Activated B cell treated with CpG ODN at 0.5 μM for 24 hours (primary cell): ENCODE measurements at regions of chr1 and their contacts with region 1.

Region 1: GRCh38 chr1:45011837-45012638 is at the start of gene UROD:
- DNase-seq: peak; percentile 69
- ATAC-seq: peak; percentile 84
- H3K4me3 Mint-ChIP-seq: peak within 1 kb of the TSS; percentile 83
- H3K27ac Mint-ChIP-seq: peak within 1 kb of the TSS; percentile 81
- H3K4me1 Mint-ChIP-seq: peaks cover 43% of the 10 kb centered on the region
- H3K27me3 Mint-ChIP-seq: no peaks in the 10 kb centered on the region
- CTCF ChIP-seq: no peak
- total RNA-seq, gene UROD: 60.3 and 64.9 TPM in 2 replicates

Region 2: GRCh38 chr1:44664730-44665370 is 347.2 kb before region 1 on chr1:
- CTCF ChIA-PET with region 1: no interaction called
- POLR2A ChIA-PET with region 1: no interaction called
- intact Hi-C with region 1: no loop called
- DNase-seq: no peak
- ATAC-seq: peak; percentile 69
- H3K4me3 Mint-ChIP-seq: no peak overlapping the region
- H3K27ac Mint-ChIP-seq: peak overlapping the region; percentile 16
- H3K4me1 Mint-ChIP-seq: peaks cover 13% of the 10 kb centered on the region
- H3K27me3 Mint-ChIP-seq: no peaks in the 10 kb centered on the region
- CTCF ChIP-seq: no peak

Region 3: DNA sequence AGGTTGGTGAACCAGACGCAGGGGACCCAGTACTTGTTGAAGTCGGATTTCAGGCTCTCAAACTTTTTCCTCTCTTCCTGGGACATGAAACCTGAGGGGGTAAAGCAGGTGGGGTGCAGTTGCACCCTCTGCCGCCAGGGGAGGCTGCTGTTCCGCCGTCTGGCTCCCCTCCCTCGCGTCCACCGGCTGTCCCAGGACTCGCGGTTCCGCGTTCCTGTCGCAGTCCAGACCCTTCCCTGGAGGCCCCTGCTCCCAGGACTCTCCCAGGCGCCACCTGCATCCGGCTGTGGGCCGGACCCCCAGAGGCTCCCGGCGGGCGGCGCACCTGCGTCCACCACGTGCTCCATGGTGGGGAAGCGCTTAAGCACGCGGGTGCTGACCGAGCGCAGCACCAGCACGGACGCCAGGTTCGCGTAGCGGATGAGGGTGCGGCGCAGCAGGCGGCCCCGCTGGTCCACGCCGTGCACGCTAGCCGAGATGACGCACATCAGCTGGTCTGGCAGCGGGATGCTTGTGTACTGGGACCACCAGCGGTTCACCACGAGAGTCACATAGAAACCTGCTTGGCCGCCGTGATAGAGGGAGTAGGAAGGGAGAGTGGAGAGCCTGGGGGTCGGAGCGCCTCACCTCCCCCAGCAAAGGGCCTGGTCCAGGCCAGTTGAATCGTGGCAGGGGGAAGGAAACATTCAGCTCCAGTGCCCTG is 225.7 kb before region 1 on chr1:
- CTCF ChIA-PET with region 1: interaction called, 12 read pairs
- POLR2A ChIA-PET with region 1: interaction called, 6 read pairs
- intact Hi-C with region 1: loop called (anchors 1 kb)
- DNase-seq: peak; percentile 81
- ATAC-seq: peak; percentile 79
- H3K4me3 Mint-ChIP-seq: peak overlapping the region; percentile 75
- H3K27ac Mint-ChIP-seq: peak overlapping the region; percentile 86
- H3K4me1 Mint-ChIP-seq: peaks cover 32% of the 10 kb centered on the region
- H3K27me3 Mint-ChIP-seq: no peaks in the 10 kb centered on the region
- CTCF ChIP-seq: peak; percentile 100

Region 4: GRCh38 chr1:44929531-44929930 is 82.5 kb before region 1 on chr1:
- CTCF ChIA-PET with region 1: no interaction called
- POLR2A ChIA-PET with region 1: no interaction called
- intact Hi-C with region 1: no loop called
- DNase-seq: no peak
- ATAC-seq: no peak
- H3K4me3 Mint-ChIP-seq: no peak overlapping the region
- H3K27ac Mint-ChIP-seq: no peak overlapping the region
- H3K4me1 Mint-ChIP-seq: no peaks in the 10 kb centered on the region
- H3K27me3 Mint-ChIP-seq: no peaks in the 10 kb centered on the region
- CTCF ChIP-seq: no peak

Region 5: DNA sequence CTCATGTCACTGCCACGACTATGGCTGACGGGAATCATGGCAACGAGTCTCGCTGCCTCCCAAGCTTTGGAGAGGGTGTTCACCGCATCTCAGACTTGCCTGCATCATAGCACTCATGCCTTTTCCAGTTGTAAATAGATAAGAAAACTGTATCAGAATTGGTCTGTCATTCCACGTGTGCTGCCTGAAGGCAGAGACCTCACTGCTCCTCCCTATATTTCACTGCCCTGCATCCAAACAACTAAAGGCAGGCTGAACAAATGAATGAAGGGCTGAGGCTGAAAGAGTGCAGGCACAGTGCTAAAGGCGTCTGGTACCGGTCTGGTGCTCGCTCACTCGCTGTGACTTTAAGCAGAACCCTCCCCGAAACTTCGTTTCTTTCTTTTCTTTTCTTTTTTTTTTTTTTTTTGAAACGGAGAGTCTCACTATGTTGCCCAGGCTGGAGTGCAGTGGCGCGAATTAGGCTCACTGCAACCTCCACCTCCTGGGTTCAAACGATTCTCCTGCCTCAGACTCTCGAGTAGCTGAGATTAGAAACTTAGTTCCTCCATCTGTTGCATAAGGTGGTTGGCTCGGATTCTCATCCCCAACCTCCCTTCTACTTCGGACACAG is 26.2 kb before region 1 on chr1:
- CTCF ChIA-PET with region 1: interaction called, 9 read pairs
- POLR2A ChIA-PET with region 1: interaction called, 52 read pairs
- intact Hi-C with region 1: loop called (anchors 1 kb)
- DNase-seq: no peak
- ATAC-seq: no peak
- H3K4me3 Mint-ChIP-seq: peak overlapping the region; percentile 100
- H3K27ac Mint-ChIP-seq: peak overlapping the region; percentile 94
- H3K4me1 Mint-ChIP-seq: peaks cover 23% of the 10 kb centered on the region
- H3K27me3 Mint-ChIP-seq: no peaks in the 10 kb centered on the region
- CTCF ChIP-seq: no peak

Region 6: GRCh38 chr1:45152126-45152525 is 140.1 kb after region 1 on chr1:
- CTCF ChIA-PET with region 1: no interaction called
- POLR2A ChIA-PET with region 1: no interaction called
- intact Hi-C with region 1: no loop called
- DNase-seq: no peak
- ATAC-seq: no peak
- H3K4me3 Mint-ChIP-seq: no peak overlapping the region
- H3K27ac Mint-ChIP-seq: no peak overlapping the region
- H3K4me1 Mint-ChIP-seq: no peaks in the 10 kb centered on the region
- H3K27me3 Mint-ChIP-seq: peaks cover 22% of the 10 kb centered on the region
- CTCF ChIP-seq: no peak

Region 7: DNA sequence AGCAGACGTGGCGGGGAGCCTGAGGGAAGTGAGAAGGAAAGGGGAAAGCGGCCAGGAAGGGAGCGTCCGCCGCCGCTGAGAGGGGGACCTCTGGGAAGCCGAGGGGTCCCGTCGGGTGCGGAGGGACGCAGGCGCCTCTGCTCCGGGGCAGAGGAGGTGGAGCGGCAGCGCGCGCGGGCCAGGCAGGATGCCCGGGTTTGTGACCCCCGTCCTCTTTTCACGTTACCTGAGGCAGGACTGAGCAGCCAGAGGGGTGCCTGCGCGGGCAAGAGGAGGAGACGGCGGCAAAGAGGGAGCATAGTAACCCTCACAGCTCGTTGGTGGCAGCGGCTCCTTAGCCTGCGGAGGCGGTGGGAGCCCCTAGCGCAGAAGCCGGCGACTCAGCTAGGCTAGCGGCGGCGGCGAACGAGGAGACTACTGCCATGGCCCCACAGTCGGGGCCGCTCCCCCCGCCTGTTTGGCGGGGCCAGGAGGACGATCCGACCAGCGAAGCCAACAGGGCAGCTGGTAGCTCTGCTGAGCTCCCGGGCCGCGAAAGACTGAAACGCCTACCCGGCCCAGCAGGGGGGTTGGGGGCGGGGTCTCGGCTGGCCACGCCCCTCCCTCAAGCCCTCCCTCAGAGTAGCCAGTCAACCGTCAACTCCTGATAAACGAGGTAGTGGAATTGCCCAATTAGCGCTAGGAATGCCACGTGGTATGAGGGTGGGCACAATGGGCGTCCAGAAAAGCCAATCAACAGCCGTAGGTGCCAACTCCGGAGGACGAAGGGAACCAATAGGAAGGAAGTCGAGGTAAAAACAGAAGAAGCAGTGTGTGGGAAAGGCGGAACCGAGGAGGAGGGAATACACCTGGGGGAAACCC is 478.8 kb after region 1 on chr1 and contains the start of gene TESK2:
- CTCF ChIA-PET with region 1: interaction called, 123 read pairs
- POLR2A ChIA-PET with region 1: interaction called, 17 read pairs
- intact Hi-C with region 1: loop called (anchors 1 kb)
- DNase-seq: peak; percentile 95
- ATAC-seq: peak; percentile 89
- H3K4me3 Mint-ChIP-seq: no peak within 1 kb of the TSS
- H3K27ac Mint-ChIP-seq: no peak within 1 kb of the TSS
- H3K4me1 Mint-ChIP-seq: peaks cover 12% of the 10 kb centered on the region
- H3K27me3 Mint-ChIP-seq: no peaks in the 10 kb centered on the region
- CTCF ChIP-seq: no peak
- total RNA-seq, gene TESK2: 11.7 and 12.2 TPM in 2 replicates

Region 8: DNA sequence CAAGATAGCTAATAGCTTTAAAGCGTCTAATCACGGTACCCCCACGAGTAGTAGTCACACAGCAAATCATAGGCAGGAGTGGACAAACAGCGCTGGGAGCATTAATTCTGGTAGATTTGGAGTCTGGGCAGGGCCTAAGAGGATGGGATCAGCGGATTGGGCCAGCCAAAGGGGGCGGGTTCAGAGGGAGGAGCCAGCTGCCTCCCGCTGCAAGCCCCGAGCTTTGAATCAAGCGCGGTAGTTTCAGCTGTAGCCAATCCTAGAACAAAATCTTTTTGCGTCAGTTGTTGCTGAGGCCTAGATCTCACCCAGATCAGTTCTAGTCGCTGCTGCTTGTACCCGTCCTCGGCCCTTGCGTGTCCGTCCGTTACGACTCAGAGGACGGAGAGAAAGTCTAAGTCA is 571.2 kb after region 1 on chr1:
- CTCF ChIA-PET with region 1: no interaction called
- POLR2A ChIA-PET with region 1: interaction called, 29 read pairs
- intact Hi-C with region 1: loop called (anchors 1 kb)
- DNase-seq: peak; percentile 84
- ATAC-seq: peak; percentile 79
- H3K4me3 Mint-ChIP-seq: peak overlapping the region; percentile 98
- H3K27ac Mint-ChIP-seq: peak overlapping the region; percentile 96
- H3K4me1 Mint-ChIP-seq: peaks cover 46% of the 10 kb centered on the region
- H3K27me3 Mint-ChIP-seq: no peaks in the 10 kb centered on the region
- CTCF ChIP-seq: no peak